ENCODE measurements at regions of chr20 and their contacts with region 1.

Region 1: DNA sequence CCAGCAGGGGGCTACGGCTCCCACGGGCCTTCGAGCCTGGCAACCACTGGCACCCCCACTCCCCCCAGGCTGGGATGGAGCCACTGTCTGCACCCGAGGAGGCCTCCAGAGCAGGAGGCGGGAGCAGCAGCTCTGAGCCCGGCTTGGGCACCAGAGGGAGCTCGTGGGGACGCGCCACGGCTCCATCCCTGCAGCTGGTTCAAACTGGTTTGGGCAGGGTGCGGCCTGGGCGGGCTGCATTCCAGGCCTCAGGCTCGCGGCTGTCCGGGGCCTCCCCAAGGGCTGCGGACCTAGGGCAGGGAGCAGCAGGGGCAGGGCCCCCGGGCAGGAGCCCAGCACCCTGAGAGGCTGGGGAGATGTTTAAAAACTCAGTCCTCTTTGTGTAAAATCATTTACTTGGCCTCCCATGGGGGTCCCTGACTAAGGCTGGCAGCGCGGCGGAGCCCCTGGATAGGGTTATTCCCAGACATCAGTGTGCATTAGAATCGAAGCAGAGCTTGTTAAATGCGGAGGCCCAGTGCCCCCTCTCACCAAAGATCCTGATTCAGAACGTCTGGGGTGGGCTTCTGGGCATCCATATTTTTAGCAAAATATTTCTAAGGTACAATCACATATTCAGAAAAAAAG is 4.1 kb upstream of the BCAS4 start:
- DNase-seq: peak; percentile 91
- ATAC-seq: peak; percentile 70
- H3K4me3 Mint-ChIP-seq: no peak overlapping the region
- H3K27ac Mint-ChIP-seq: peak overlapping the region; percentile 83
- H3K4me1 Mint-ChIP-seq: peaks cover 18% of the 10 kb centered on the region
- H3K27me3 Mint-ChIP-seq: no peaks in the 10 kb centered on the region

Region 2: DNA sequence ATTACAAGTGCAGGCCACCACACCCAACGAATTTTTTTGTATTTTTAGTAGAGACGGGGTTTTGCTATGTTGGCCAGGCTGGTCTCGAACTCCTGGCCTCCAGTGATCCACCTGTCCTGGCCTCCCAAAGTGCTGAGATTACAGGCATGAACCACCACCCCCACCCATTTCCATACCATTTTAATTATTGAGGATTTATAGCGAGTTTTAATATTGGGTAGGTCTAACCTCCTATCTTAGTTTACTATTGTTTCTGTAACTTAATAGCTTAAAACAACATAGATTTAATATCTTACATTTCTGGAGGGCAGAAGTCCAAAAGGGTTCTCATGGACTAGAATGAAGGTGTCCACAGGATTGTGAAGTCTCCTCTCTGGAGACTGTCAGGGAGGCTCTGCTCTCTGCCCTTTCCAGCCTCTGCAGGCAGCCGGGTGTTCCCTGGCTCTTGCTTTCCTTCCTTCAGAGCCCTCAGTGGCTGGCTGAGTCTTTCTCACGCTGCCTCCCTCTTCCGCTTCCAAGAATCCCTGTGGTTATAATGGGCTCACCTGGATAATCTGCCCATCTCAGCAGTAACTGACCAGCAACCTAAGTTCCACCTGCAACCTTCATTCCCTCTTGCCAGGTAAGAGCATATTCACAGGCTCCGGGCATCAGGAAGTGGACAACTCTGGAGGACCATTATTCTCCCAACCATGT is 14.5 kb before region 1 on chr20:
- CTCF ChIA-PET with region 1: interaction called, 16 read pairs
- DNase-seq: no peak
- ATAC-seq: no peak
- H3K4me3 Mint-ChIP-seq: no peak overlapping the region
- H3K27ac Mint-ChIP-seq: no peak overlapping the region
- H3K4me1 Mint-ChIP-seq: peaks cover 4% of the 10 kb centered on the region
- H3K27me3 Mint-ChIP-seq: peaks cover 12% of the 10 kb centered on the region

Region 3: GRCh38 chr20:50837532-50838506 is 47.1 kb after region 1 on chr20:
- CTCF ChIA-PET with region 1: interaction called, 14 read pairs
- DNase-seq: peak; percentile 86
- ATAC-seq: peak; percentile 88
- H3K4me3 Mint-ChIP-seq: peak overlapping the region; percentile 20
- H3K27ac Mint-ChIP-seq: peak overlapping the region; percentile 89
- H3K4me1 Mint-ChIP-seq: peaks cover 57% of the 10 kb centered on the region
- H3K27me3 Mint-ChIP-seq: no peaks in the 10 kb centered on the region

Region 4: DNA sequence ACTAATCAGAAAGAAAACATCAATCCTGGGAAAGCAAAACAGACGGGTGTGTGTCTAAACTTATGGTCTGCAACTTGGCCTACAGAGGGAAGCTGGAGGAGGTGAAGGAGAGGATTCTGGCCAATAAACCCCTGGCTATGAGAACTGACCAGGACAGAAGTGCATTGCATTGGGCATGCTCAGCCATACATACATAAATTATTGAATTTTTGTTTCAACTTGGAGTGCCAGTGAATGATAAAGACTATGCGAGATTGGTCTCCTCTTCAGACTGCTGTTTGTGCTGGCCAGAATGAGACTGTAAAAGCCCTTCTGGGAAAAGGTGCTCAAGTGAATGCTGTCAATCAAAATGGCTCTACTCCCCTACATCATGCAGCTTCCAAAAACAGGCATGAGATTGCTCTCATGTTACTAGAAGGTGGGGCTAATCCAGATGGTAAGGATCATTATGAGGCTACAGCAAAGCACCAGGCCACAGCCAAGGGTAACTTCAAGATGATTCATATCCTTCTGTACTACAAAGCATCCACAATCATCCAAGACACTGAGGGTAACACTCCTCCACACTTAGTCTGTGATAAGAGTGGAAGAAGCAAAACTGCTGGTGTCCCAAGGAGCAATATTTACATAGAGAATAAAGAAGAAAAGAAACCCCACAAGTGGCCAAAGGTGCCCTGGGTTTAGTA is 123.1 kb after region 1 on chr20:
- CTCF ChIA-PET with region 1: interaction called, 31 read pairs
- DNase-seq: peak; percentile 60
- ATAC-seq: peak; percentile 92
- H3K4me3 Mint-ChIP-seq: no peak overlapping the region
- H3K27ac Mint-ChIP-seq: peak overlapping the region; percentile 66
- H3K4me1 Mint-ChIP-seq: peaks cover 74% of the 10 kb centered on the region
- H3K27me3 Mint-ChIP-seq: no peaks in the 10 kb centered on the region

Region 5: GRCh38 chr20:50943069-50943468 is 152.3 kb after region 1 on chr20:
- CTCF ChIA-PET with region 1: interaction called, 10 read pairs
- DNase-seq: no peak
- ATAC-seq: peak; percentile 42
- H3K4me3 Mint-ChIP-seq: no peak overlapping the region
- H3K27ac Mint-ChIP-seq: no peak overlapping the region
- H3K4me1 Mint-ChIP-seq: no peaks in the 10 kb centered on the region
- H3K27me3 Mint-ChIP-seq: no peaks in the 10 kb centered on the region

Region 6: GRCh38 chr20:50987592-50988210 is 196.9 kb after region 1 on chr20:
- CTCF ChIA-PET with region 1: interaction called, 37 read pairs
- DNase-seq: peak; percentile 71
- ATAC-seq: peak; percentile 93
- H3K4me3 Mint-ChIP-seq: no peak overlapping the region
- H3K27ac Mint-ChIP-seq: no peak overlapping the region
- H3K4me1 Mint-ChIP-seq: peaks cover 4% of the 10 kb centered on the region
- H3K27me3 Mint-ChIP-seq: peaks cover 40% of the 10 kb centered on the region